ENCODE measurements at regions of chr17 and their contacts with region 1.

Region 1: DNA sequence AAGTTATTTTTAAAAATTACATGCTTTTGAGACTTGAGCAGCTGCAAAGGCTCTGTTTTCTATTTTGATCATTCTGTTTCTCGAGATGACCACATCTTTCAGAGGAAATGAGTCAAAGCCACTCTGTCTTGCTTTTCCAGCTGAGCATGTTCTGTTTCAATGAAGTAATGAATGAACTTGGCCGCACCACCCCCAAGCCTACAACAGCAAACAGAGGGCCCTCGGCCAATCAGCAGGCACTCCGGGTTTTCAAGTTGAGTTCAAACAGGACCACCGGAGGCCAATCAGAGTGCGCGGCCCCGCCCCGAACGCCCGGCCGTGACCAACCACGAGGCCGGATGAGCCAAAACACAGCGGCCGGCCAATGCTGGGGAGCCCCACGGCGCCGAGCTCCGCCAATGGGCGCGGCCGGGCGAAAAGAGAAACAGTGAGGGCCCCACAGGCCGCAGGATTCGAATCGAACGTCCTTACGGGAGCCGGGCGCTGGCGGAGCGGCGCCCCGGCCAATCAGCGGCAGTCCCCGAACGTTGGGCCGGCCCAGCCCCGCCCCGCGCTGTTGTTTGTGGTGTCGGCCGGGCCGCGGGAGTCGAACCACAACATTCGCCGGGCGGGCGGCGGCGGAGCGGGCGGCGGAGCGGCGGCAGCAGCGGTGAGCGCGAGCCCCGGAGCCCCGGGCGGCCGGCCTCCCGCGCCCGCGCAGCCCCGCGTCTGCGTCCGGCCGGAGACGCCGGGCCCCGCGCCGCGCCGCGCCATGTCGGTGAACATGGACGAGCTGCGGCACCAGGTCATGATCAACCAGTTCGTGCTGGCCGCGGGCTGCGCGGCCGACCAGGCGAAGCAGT is at the start of gene UBALD2:
- DNase-seq: peak; percentile 99
- H3K4me3 ChIP-seq: peak within 1 kb of the TSS; percentile 94 to 100
- H3K4me3 Mint-ChIP-seq: peak within 1 kb of the TSS; percentile 89 to 95 (median 92)
- H3K27ac ChIP-seq: peak within 1 kb of the TSS; percentile 82
- H3K27ac Mint-ChIP-seq: peak within 1 kb of the TSS; percentile 93 to 98 (median 96)
- H3K4me1 ChIP-seq: peaks cover 57% of the 10 kb centered on the region
- H3K4me1 Mint-ChIP-seq: peaks cover 33 to 69% (median 52%) of the 10 kb centered on the region in 4 donors
- H3K27me3 ChIP-seq: no peaks in the 10 kb centered on the region
- H3K27me3 Mint-ChIP-seq: no peaks in the 10 kb centered on the region
- total RNA-seq, gene UBALD2: 101 to 103 TPM

Region 2: DNA sequence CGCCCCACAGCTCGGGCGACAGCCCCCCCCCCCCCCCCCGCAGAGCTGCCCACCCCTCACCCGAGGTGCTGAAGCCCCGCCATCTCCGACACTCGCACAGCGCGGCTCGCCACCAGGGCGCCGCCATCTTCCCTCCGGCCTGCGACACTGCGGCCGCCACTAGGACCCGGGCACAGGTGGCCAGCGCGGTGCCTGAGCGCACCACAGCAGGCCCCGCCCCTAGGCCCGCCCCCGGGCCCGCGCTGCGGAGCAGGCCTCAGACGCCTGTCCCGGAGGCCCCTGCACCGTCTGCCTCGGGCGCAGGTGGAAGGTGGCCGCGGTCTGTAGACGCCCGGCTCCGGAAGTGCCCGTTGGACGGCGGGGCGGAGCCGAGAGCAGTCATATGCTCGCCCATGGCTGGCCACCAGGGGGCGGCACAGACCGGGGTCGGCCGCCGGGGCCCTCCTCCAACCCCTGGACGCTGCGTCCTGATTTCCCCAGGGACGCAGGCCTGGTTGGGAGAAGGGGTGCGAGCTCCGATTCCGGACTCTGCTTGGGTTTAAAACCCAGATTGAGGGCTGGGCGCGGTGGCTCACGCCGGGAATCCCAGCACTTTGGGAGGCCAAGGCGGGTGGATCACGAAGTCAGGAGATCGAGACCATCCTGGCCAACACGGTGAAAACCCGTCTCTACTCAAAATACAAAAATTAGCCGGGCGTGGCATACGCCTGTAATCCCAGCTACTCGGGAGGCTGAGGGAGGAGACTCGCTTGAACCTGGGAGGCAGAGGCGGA is 360.0 kb before region 1 on chr17 and contains the start of gene MRPL38:
- CTCF ChIA-PET with region 1: no interaction called
- POLR2A ChIA-PET with region 1: no interaction called
- intact Hi-C with region 1: loop called (anchors 10 kb)
- DNase-seq: peak; percentile 93 to 98 (median 95)
- H3K4me3 ChIP-seq: peak within 1 kb of the TSS; percentile 57 to 61
- H3K4me3 Mint-ChIP-seq: peak within 1 kb of the TSS; percentile 88 to 93 (median 92)
- H3K27ac ChIP-seq: peak within 1 kb of the TSS; percentile 74
- H3K27ac Mint-ChIP-seq: peak within 1 kb of the TSS; percentile 82 to 98 (median 94)
- H3K4me1 ChIP-seq: peaks cover 17% of the 10 kb centered on the region
- H3K4me1 Mint-ChIP-seq: peaks cover 5 to 20% (median 9%) of the 10 kb centered on the region in 4 donors
- H3K27me3 ChIP-seq: no peaks in the 10 kb centered on the region
- H3K27me3 Mint-ChIP-seq: no peaks in the 10 kb centered on the region
- total RNA-seq, gene MRPL38: 126 to 142 TPM

Region 3: GRCh38 chr17:76141212-76142038 is 123.6 kb before region 1 on chr17 and contains the start of gene FOXJ1:
- CTCF ChIA-PET with region 1: interaction called, 6 read pairs
- POLR2A ChIA-PET with region 1: interaction called, 149 read pairs
- intact Hi-C with region 1: no loop called
- DNase-seq: peak; percentile 90 to 93 (median 92)
- H3K4me3 ChIP-seq: peak within 1 kb of the TSS; percentile 19 to 48
- H3K4me3 Mint-ChIP-seq: peak within 1 kb of the TSS; percentile 75 to 94 (median 84)
- H3K27ac ChIP-seq: no peak within 1 kb of the TSS
- H3K27ac Mint-ChIP-seq: peak within 1 kb of the TSS; percentile 78 to 96 (median 85)
- H3K4me1 ChIP-seq: peaks cover 66% of the 10 kb centered on the region
- H3K4me1 Mint-ChIP-seq: peaks cover 39 to 63% (median 50%) of the 10 kb centered on the region in 4 donors
- H3K27me3 ChIP-seq: peaks cover 4% of the 10 kb centered on the region
- H3K27me3 Mint-ChIP-seq: peaks cover 3% of the 10 kb centered on the region in 2 donors
- total RNA-seq, gene FOXJ1: 0.19 to 0.20 TPM

Region 4: GRCh38 chr17:76191896-76192295 is 73.1 kb before region 1 on chr17:
- CTCF ChIA-PET with region 1: interaction called, 12 read pairs
- POLR2A ChIA-PET with region 1: interaction called, 603 read pairs
- intact Hi-C with region 1: loop called (anchors 2 kb)
- DNase-seq: peak; percentile 80 to 90 (median 86)
- H3K4me3 ChIP-seq: peak overlapping the region in 1 of 2 donors; percentile 19
- H3K4me3 Mint-ChIP-seq: peak overlapping the region; percentile 33 to 87 (median 80)
- H3K27ac ChIP-seq: peak overlapping the region; percentile 66
- H3K27ac Mint-ChIP-seq: peak overlapping the region; percentile 94 to 98 (median 95)
- H3K4me1 ChIP-seq: peaks cover 98% of the 10 kb centered on the region
- H3K4me1 Mint-ChIP-seq: peaks cover 58 to 87% (median 75%) of the 10 kb centered on the region in 4 donors
- H3K27me3 ChIP-seq: no peaks in the 10 kb centered on the region
- H3K27me3 Mint-ChIP-seq: no peaks in the 10 kb centered on the region

Region 5: DNA sequence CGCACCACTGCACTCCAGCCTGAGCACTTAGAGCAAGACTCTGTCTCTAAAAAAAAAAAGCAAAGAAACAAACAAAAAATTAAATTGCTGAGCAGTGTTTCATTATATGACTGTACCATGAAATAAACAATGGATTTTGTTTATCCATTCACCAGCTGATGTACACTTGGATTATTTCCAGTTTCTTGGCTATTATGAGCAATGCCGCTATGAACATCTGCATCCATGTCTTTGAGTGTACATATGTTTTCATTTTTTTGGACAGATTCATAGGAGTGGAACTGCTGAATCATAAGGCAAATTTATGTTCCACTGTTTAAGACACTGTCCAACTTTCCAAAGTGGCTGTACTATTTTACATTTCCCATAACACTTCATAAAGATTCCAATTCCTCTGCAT is 32.6 kb before region 1 on chr17:
- CTCF ChIA-PET with region 1: no interaction called
- POLR2A ChIA-PET with region 1: interaction called, 44 read pairs
- intact Hi-C with region 1: loop called (anchors 5 kb)
- DNase-seq: no peak
- H3K4me3 ChIP-seq: no peak overlapping the region
- H3K4me3 Mint-ChIP-seq: no peak overlapping the region
- H3K27ac ChIP-seq: no peak overlapping the region
- H3K27ac Mint-ChIP-seq: peak overlapping the region in 2 of 7 donors; percentile 7 to 53
- H3K4me1 ChIP-seq: peaks cover 14% of the 10 kb centered on the region
- H3K4me1 Mint-ChIP-seq: peaks cover 24 to 51% (median 37%) of the 10 kb centered on the region in 4 donors
- H3K27me3 ChIP-seq: no peaks in the 10 kb centered on the region
- H3K27me3 Mint-ChIP-seq: no peaks in the 10 kb centered on the region

Region 6: DNA sequence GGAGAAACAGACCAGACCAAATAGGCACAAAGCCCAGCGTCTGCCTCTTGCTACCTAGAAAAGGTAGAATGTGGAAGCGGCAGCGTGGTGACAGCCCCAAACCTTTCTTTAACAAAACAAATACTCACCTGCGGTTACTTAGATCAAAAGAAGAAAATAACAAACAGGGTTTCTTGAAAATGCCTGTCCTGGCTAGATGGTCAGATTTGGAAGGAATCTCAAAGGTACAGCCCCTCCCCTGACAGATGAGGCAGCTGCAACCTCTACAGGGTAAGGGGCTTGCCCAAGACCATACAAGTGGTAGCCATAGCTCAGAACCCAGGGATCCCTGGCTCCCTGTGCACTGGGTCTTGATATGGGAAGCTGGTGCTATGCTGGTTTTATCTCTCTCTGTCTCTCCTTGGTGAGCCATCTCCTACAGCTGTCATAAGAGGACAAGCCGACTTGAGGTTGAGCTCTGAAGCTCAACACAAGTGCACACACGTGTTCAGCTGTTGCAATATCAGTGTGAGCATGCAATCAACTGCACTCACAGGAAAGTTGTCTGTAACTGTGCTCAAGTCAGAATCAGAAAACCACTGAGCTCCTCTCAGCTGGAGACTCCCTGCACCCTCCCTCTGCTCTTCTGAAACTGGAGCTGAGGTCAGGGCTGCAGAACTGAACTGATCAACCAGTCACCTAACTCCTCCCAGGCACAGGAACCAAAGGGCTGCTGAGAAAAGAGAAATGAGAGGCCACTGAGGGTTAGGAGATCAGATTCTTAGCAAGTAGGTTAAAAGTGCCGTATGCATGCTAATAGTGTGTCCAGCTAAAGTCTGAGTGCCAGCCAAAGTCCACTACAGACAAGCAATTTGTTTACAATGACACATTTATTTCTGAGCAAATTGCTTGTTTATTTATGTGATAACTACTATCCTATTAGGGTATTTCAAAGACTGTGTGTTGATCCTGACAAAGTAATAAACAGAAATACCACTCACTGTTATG is 18.6 kb before region 1 on chr17:
- CTCF ChIA-PET with region 1: interaction called, 27 read pairs
- POLR2A ChIA-PET with region 1: interaction called, 620 read pairs
- intact Hi-C with region 1: loop called (anchors 1 kb)
- DNase-seq: peak; percentile 47 to 61 (median 58)
- H3K4me3 ChIP-seq: peak overlapping the region in 1 of 2 donors; percentile 11
- H3K4me3 Mint-ChIP-seq: peak overlapping the region in 7 of 8 donors; percentile 59 to 85 (median 83)
- H3K27ac ChIP-seq: peak overlapping the region; percentile 25
- H3K27ac Mint-ChIP-seq: peak overlapping the region; percentile 71 to 94 (median 91)
- H3K4me1 ChIP-seq: peaks cover 67% of the 10 kb centered on the region
- H3K4me1 Mint-ChIP-seq: peaks cover 18 to 81% (median 50%) of the 10 kb centered on the region in 4 donors
- H3K27me3 ChIP-seq: no peaks in the 10 kb centered on the region
- H3K27me3 Mint-ChIP-seq: no peaks in the 10 kb centered on the region

Measured in CD4-positive, alpha-beta memory T cell (primary cell).